ENCODE measurements at regions of chr22 and their contacts with region 1.

Region 1: GRCh38 chr22:21579518-21580147 is 12.1 kb downstream of the UBE2L3 start:
- DNase-seq: no peak
- ATAC-seq: no peak
- H3K4me3 ChIP-seq: no peak overlapping the region
- H3K4me3 Mint-ChIP-seq: no peak overlapping the region
- H3K27ac ChIP-seq: no peak overlapping the region
- H3K27ac Mint-ChIP-seq: peak overlapping the region; percentile 50
- H3K4me1 ChIP-seq: peaks cover 30% of the 10 kb centered on the region
- H3K4me1 Mint-ChIP-seq: peaks cover 60% of the 10 kb centered on the region
- H3K27me3 ChIP-seq: no peaks in the 10 kb centered on the region
- H3K27me3 Mint-ChIP-seq: no peaks in the 10 kb centered on the region
- CTCF ChIP-seq: no peak

Region 2: GRCh38 chr22:21612865-21613265 is 33.2 kb after region 1 on chr22:
- CTCF ChIA-PET with region 1: no interaction called
- POLR2A ChIA-PET with region 1: no interaction called
- intact Hi-C with region 1: loop called in 1 of 2 experiments (anchors 5 kb)
- DNase-seq: no peak
- ATAC-seq: no peak
- H3K4me3 ChIP-seq: no peak overlapping the region
- H3K4me3 Mint-ChIP-seq: no peak overlapping the region
- H3K27ac ChIP-seq: no peak overlapping the region
- H3K27ac Mint-ChIP-seq: no peak overlapping the region
- H3K4me1 ChIP-seq: no peaks in the 10 kb centered on the region
- H3K4me1 Mint-ChIP-seq: peaks cover 25% of the 10 kb centered on the region
- H3K27me3 ChIP-seq: no peaks in the 10 kb centered on the region
- H3K27me3 Mint-ChIP-seq: no peaks in the 10 kb centered on the region
- CTCF ChIP-seq: no peak

Region 3: DNA sequence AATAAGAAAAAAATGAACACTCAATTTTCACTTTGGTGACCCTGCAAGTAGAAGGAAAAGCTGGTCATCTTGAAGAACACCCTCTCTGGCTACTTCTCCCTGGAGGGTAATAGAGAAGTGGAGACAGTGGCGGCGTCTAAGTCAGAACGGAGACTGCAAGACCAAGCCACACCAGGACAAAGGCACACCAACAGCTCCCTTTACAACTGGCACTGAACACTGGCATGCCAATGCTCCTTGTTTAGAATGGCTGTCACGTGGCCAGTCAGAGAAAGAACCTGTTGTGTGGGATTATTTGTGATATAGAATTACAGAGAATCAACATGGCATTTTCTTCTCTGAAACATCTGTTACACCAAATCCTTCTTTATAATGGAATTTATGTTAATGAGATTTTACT is 217.2 kb after region 1 on chr22:
- CTCF ChIA-PET with region 1: no interaction called
- POLR2A ChIA-PET with region 1: no interaction called
- intact Hi-C with region 1: no loop called
- DNase-seq: no peak
- ATAC-seq: no peak
- H3K4me3 ChIP-seq: no peak overlapping the region
- H3K4me3 Mint-ChIP-seq: no peak overlapping the region
- H3K27ac ChIP-seq: peak overlapping the region in 1 of 2 experiments; percentile 11
- H3K27ac Mint-ChIP-seq: no peak overlapping the region
- H3K4me1 ChIP-seq: no peaks in the 10 kb centered on the region
- H3K4me1 Mint-ChIP-seq: peaks cover 8% of the 10 kb centered on the region
- H3K27me3 ChIP-seq: no peaks in the 10 kb centered on the region
- H3K27me3 Mint-ChIP-seq: no peaks in the 10 kb centered on the region
- CTCF ChIP-seq: no peak